Heart left ventricle (tissue), 16 donors: ENCODE measurements at regions of chr10 and their contacts with region 1.

Region 1: DNA sequence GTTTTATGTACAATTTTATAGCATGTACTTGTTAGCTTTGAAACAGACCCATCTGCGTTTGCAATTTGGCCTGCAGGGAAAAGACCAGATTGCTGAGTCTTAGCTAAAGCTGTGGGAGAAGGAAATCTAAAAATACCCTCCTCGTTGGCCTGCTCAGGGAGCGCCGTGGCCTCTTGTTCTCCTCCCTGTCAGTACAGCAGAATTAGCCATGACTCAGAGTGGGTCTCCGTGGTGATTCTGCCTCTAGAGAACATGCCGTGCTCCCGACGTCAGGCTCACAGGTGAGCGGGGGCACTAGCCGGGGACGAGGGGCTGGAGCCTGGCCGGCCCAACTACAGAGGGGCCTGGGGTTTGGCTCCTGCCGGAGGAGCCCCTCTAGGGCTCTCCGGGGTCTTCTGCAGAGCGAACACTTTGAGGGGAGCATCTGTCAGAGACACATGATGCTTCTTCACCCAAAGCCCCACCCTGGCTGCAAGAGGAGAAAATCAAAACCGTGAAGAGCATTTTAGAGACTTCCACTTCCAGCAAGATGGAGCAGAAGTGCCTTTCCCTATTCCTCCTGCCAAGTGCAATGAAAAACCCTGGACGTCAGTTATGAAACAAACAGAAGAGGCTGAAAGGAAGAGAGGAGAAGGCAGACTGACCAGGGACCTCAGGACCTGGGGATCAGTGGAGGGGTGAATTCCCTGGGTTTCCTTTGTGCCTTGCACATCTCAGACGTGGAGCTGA is 98.9 kb downstream of the LHPP start:
- DNase-seq: peak; percentile 70 to 91 (median 79)
- ATAC-seq: peak; percentile 90 to 95 (median 94)
- H3K4me3 ChIP-seq: peak overlapping the region in 1 of 12 donors; percentile 5
- H3K27ac ChIP-seq: peak overlapping the region; percentile 56 to 90 (median 85)
- H3K4me1 ChIP-seq: peaks cover 19 to 49% (median 36%) of the 10 kb centered on the region in 12 donors
- H3K27me3 ChIP-seq: no peaks in the 10 kb centered on the region
- CTCF ChIP-seq: no peak
- POLR2A ChIP-seq: no peak

Region 2: GRCh38 chr10:124619195-124619594 is 58.7 kb after region 1 on chr10:
- intact Hi-C with region 1: loop called in 5 of 10 experiments (anchors 5 to 10 kb)
- DNase-seq: no peak
- ATAC-seq: no peak
- H3K4me3 ChIP-seq: no peak overlapping the region
- H3K27ac ChIP-seq: no peak overlapping the region
- H3K4me1 ChIP-seq: peaks cover 0 to 71% (median 32%) of the 10 kb centered on the region in 12 donors
- H3K27me3 ChIP-seq: no peaks in the 10 kb centered on the region
- CTCF ChIP-seq: no peak
- POLR2A ChIP-seq: no peak